ENCODE measurements at regions of chr16 and their contacts with region 1.

Region 1: DNA sequence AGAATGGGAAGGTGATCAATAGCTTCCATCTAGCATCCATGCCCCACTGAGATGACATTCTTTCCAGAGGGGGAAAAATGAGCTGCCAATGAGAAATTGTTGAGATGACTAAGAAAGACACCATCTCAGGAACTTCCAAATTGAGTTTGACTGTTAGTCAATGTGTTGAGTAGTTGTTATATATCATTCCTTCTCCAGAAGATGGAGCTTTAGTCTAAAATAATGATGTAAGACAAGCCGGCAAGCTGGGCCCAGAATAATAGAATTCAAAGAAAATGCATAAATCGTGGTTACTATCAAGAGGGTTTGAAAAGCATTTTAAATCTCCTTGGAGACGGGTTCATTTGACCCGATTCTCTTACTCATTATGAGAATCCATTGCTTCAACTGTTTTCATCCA is 71.0 kb upstream of the ATF7IP2 start:
- DNase-seq: peak in 6 of 9 donors; percentile 25 to 63 (median 46)
- ATAC-seq: peak; percentile 65
- H3K4me3 ChIP-seq: no peak overlapping the region
- H3K4me3 Mint-ChIP-seq: no peak overlapping the region
- H3K27ac ChIP-seq: no peak overlapping the region
- H3K27ac Mint-ChIP-seq: no peak overlapping the region
- H3K4me1 ChIP-seq: no peaks in the 10 kb centered on the region
- H3K4me1 Mint-ChIP-seq: peaks cover 9 to 27% (median 20%) of the 10 kb centered on the region in 7 donors
- H3K27me3 ChIP-seq: no peaks in the 10 kb centered on the region
- H3K27me3 Mint-ChIP-seq: no peaks in the 10 kb centered on the region

Region 2: DNA sequence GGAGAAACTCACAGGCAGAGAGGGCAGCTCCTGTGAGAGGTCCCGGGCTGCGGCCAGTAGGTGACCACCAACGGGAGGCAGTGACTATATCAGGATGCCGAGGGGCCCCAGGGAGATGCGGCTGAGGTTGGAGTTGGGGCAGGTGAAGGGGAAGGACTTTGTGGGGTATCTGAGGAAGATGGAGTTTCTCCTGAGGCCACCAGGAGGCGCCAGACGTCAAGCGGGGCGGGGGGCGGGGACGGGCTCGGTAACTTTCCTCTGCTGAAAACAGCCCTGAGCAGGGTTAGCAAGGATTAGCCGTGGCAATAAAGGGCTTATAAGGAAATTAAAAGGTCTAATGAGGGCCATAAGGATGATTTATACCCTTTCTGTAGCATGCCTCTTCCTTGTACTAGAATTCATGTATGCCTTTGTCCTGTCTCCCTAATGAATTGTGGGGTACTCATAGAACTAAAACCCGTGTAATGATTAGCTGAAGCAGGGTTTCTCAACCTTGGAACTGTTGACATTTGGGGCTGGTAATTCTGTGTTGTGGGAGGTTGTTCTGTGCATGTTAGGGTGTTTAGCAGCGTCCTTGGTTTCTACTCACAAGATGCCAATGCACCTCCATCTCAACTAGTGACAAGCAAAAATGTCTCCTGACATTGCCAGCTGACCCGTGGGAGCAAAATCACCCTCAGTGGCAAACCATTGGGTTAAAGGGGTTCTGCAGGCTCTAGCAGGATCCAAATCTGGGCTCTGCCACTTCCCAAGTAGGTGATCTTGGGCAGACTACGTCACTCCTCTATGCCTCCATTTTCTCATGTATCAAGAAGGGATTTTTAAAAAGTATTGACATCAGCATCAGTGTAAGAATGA is 57.8 kb before region 1 on chr16:
- CTCF ChIA-PET with region 1: interaction called, 3 read pairs
- POLR2A ChIA-PET with region 1: no interaction called
- intact Hi-C with region 1: loop called (anchors 2 to 10 kb)
- DNase-seq: peak; percentile 10 to 52 (median 30)
- ATAC-seq: peak; percentile 74
- H3K4me3 ChIP-seq: no peak overlapping the region
- H3K4me3 Mint-ChIP-seq: peak overlapping the region in 1 of 10 donors; percentile 29
- H3K27ac ChIP-seq: no peak overlapping the region
- H3K27ac Mint-ChIP-seq: peak overlapping the region in 2 of 9 donors; percentile 55 to 56
- H3K4me1 ChIP-seq: no peaks in the 10 kb centered on the region
- H3K4me1 Mint-ChIP-seq: peaks cover 0 to 5% (median 3%) of the 10 kb centered on the region in 7 donors
- H3K27me3 ChIP-seq: no peaks in the 10 kb centered on the region
- H3K27me3 Mint-ChIP-seq: peaks cover 1 to 11% (median 7%) of the 10 kb centered on the region in 5 donors

Region 3: GRCh38 chr16:10497132-10498101 is 182.6 kb after region 1 on chr16:
- CTCF ChIA-PET with region 1: no interaction called
- POLR2A ChIA-PET with region 1: interaction called, 3 read pairs
- intact Hi-C with region 1: loop called in 1 of 2 experiments (anchors 2 kb)
- DNase-seq: peak in 2 of 9 donors; percentile 3 to 12
- ATAC-seq: no peak
- H3K4me3 ChIP-seq: no peak overlapping the region
- H3K4me3 Mint-ChIP-seq: peak overlapping the region in 1 of 10 donors; percentile 13
- H3K27ac ChIP-seq: no peak overlapping the region
- H3K27ac Mint-ChIP-seq: no peak overlapping the region
- H3K4me1 ChIP-seq: no peaks in the 10 kb centered on the region
- H3K4me1 Mint-ChIP-seq: peaks cover 0 to 7% (median 4%) of the 10 kb centered on the region in 7 donors
- H3K27me3 ChIP-seq: no peaks in the 10 kb centered on the region
- H3K27me3 Mint-ChIP-seq: no peaks in the 10 kb centered on the region

Region 4: GRCh38 chr16:10509534-10510025 is 194.8 kb after region 1 on chr16:
- CTCF ChIA-PET with region 1: interaction called, 47 read pairs
- POLR2A ChIA-PET with region 1: interaction called, 8 read pairs
- intact Hi-C with region 1: loop called (anchors 1 kb)
- DNase-seq: peak; percentile 18 to 78 (median 65)
- ATAC-seq: peak; percentile 90
- H3K4me3 ChIP-seq: no peak overlapping the region
- H3K4me3 Mint-ChIP-seq: no peak overlapping the region
- H3K27ac ChIP-seq: no peak overlapping the region
- H3K27ac Mint-ChIP-seq: peak overlapping the region in 5 of 9 donors; percentile 6 to 69 (median 53)
- H3K4me1 ChIP-seq: no peaks in the 10 kb centered on the region
- H3K4me1 Mint-ChIP-seq: peaks cover 2 to 10% (median 4%) of the 10 kb centered on the region in 7 donors
- H3K27me3 ChIP-seq: no peaks in the 10 kb centered on the region
- H3K27me3 Mint-ChIP-seq: peaks cover 0 to 8% (median 0%) of the 10 kb centered on the region in 5 donors